Vagina (tissue), 2 donors: ENCODE measurements at regions of chr6 and their contacts with region 1.

Region 1: DNA sequence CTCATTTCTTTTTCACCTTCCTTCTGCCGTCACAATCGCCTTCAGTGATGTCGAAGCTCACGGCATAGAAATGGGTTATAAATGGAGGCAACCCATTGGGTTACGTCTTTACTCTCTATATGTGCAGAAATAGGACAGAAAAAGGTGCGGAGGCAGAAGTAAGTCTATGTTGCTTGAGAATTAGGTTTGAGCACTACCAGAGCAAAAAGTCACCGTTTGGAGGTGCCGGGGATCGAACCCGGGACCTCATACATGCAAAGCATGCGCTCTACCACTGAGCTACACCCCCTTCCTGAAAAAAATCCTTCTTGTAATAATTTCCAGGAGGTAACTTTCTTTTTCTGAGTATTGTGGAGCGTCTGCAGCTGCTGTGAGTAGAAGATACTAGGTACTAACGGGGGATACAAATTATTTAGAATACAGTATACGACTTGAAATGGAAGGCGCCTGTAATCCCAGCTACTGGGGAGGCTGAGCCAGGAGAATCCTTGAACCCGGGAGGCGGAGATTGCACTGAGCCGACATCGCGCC is 134.2 kb downstream of the TRIM27 start:
- DNase-seq: no peak
- H3K4me3 ChIP-seq: peak overlapping the region in 1 of 2 donors; percentile 11
- H3K27ac ChIP-seq: no peak overlapping the region
- H3K4me1 ChIP-seq: peaks cover 7% of the 10 kb centered on the region
- H3K27me3 ChIP-seq: peaks cover 6% of the 10 kb centered on the region
- CTCF ChIP-seq: no peak
- POLR2A ChIP-seq: no peak

Region 2: GRCh38 chr6:30169658-30170614 is 1380.3 kb after region 1 on chr6:
- intact Hi-C with region 1: loop called (anchors 5 kb)
- DNase-seq: peak in 1 of 2 donors; percentile 25
- H3K4me3 ChIP-seq: no peak overlapping the region
- H3K27ac ChIP-seq: no peak overlapping the region
- H3K4me1 ChIP-seq: peaks cover 9% of the 10 kb centered on the region
- H3K27me3 ChIP-seq: peaks cover 8% of the 10 kb centered on the region
- CTCF ChIP-seq: peak in 2 of 3 experiments; percentile 48 to 56
- POLR2A ChIP-seq: no peak